WTC11 (cell line): ENCODE measurements at regions of chr11 and their contacts with region 1.

Region 1: GRCh38 chr11:125451400-125452124 is 44.5 kb downstream of the FEZ1 start:
- DNase-seq: peak; percentile 88
- ATAC-seq: peak; percentile 95
- H3K4me3 Mint-ChIP-seq: no peak overlapping the region
- H3K27ac Mint-ChIP-seq: no peak overlapping the region
- H3K4me1 Mint-ChIP-seq: peaks cover 26% of the 10 kb centered on the region
- H3K27me3 Mint-ChIP-seq: no peaks in the 10 kb centered on the region
- CTCF ChIP-seq: no peak

Region 2: DNA sequence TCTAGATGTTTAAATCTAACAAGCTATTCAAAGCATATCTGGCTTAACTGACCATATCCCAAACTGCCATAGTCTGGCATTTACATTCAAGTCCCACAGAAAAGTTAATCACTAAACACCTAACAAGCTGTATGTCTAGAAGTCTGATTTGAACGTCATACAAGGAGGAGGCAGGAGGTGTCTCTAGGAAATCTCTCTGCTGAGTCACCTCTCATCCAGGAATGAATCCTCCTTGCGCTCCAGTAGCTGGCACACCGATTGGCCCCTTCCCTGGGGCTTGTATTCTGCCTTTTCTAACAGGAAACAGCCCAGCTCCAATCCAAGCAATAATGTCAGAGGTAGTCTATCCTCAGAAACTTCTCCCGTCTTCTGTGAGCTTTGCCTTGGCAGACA is 12.7 kb after region 1 on chr11:
- CTCF ChIA-PET with region 1: interaction called, 15 read pairs
- POLR2A ChIA-PET with region 1: no interaction called
- DNase-seq: no peak
- ATAC-seq: no peak
- H3K4me3 Mint-ChIP-seq: no peak overlapping the region
- H3K27ac Mint-ChIP-seq: no peak overlapping the region
- H3K4me1 Mint-ChIP-seq: peaks cover 21% of the 10 kb centered on the region
- H3K27me3 Mint-ChIP-seq: no peaks in the 10 kb centered on the region
- CTCF ChIP-seq: no peak

Region 3: DNA sequence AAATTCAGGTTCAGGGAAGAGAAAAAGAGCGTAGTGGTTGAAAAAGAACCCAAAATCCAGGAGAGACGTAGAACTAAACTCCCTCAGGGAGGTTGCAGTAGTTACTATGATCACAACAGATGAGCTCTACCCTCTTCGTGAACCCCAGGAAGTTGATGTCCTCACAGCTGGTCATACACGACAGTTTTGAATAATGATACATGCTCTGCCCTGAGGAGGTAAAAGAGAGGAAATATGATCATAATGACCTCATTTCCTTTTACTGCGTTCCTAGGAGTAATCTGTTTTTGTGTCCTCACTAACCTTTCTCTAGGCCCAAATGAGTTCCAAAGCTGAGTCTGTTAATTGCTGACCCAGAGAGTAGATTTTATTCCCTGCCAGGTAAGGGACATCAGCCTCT is 325.7 kb after region 1 on chr11:
- CTCF ChIA-PET with region 1: no interaction called
- POLR2A ChIA-PET with region 1: no interaction called
- DNase-seq: no peak
- ATAC-seq: no peak
- H3K4me3 Mint-ChIP-seq: no peak overlapping the region
- H3K27ac Mint-ChIP-seq: no peak overlapping the region
- H3K4me1 Mint-ChIP-seq: no peaks in the 10 kb centered on the region
- H3K27me3 Mint-ChIP-seq: peaks cover 13% of the 10 kb centered on the region
- CTCF ChIP-seq: no peak